CD14-positive monocyte (primary cell): ENCODE measurements at regions of chr6 and their contacts with region 1.

Region 1: DNA sequence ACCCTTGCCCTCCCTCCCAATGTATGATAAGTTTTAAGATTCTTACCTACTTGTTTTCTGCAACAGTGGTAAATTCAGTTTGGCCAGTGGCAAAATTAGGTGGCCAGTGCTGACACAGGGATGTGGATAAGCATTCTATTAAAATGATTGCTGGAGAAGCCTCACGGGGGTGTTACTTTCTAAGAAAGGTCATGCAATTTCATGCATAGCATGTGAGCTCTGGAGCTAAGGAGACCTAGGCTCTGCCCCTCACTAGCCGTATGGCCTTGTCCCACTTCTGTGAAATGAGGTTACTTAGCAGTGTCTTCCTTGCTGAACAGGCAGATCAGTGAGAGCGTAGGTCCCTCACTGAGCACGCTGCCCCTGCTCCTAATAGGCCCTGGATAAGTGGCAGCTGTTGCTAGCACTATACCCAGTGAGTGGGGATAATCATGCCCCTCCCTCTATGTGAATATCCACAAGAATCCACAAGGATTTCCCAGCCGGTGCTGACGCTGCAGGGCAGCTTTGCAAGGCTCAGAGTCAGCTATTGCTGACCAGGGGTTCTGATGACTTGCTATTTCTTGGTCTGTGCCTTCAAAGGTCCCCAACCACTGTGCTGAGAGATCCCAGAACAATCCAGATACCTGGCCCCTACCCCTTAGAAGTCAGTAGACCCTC is 86.5 kb upstream of the MRPS10 start:
- DNase-seq: no peak
- H3K4me3 ChIP-seq: no peak overlapping the region
- H3K4me3 Mint-ChIP-seq: no peak overlapping the region
- H3K27ac ChIP-seq: no peak overlapping the region
- H3K27ac Mint-ChIP-seq: peak overlapping the region in 3 of 7 donors; percentile 26 to 54 (median 50)
- H3K4me1 ChIP-seq: no peaks in the 10 kb centered on the region
- H3K4me1 Mint-ChIP-seq: peaks cover 15% of the 10 kb centered on the region
- H3K27me3 ChIP-seq: no peaks in the 10 kb centered on the region
- H3K27me3 Mint-ChIP-seq: peaks cover 0 to 6% (median 0%) of the 10 kb centered on the region in 3 donors
- CTCF ChIP-seq: no peak

Region 2: DNA sequence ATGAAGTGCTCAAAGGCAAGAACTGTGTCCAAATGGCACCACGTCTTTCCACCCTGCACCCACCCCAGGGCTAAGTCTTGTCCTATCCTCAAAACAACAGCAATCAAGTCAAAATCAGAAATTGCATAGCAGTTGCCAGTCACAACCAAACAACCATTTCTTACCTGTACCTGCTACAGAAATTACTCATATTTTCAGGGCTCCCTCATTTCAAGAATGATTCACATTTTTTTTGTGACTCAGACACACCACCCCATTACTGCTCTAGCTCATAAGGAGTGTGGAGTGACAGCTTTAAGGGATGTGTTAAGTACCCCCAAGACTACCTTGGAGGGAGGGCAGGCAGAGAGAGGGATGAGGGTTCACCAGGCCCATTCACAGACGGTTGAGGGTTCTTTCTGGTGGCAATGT is 35.8 kb after region 1 on chr6:
- intact Hi-C with region 1: loop called in 1 of 2 experiments (anchors 5 kb)
- DNase-seq: no peak
- H3K4me3 ChIP-seq: no peak overlapping the region
- H3K4me3 Mint-ChIP-seq: no peak overlapping the region
- H3K27ac ChIP-seq: no peak overlapping the region
- H3K27ac Mint-ChIP-seq: peak overlapping the region in 2 of 7 donors; percentile 50 to 71
- H3K4me1 ChIP-seq: peaks cover 20 to 22% of the 10 kb centered on the region in 2 donors
- H3K4me1 Mint-ChIP-seq: peaks cover 45% of the 10 kb centered on the region
- H3K27me3 ChIP-seq: no peaks in the 10 kb centered on the region
- H3K27me3 Mint-ChIP-seq: peaks cover 0 to 2% (median 0%) of the 10 kb centered on the region in 3 donors
- CTCF ChIP-seq: no peak

Region 3: GRCh38 chr6:43367245-43367984 is 1063.2 kb after region 1 on chr6:
- intact Hi-C with region 1: no loop called
- DNase-seq: peak; percentile 71 to 84 (median 82)
- H3K4me3 ChIP-seq: peak overlapping the region in 2 of 3 experiments; percentile 57 to 89
- H3K4me3 Mint-ChIP-seq: peak overlapping the region; percentile 89 to 94
- H3K27ac ChIP-seq: peak overlapping the region; percentile 4 to 77
- H3K27ac Mint-ChIP-seq: peak overlapping the region; percentile 58 to 94 (median 89)
- H3K4me1 ChIP-seq: peaks cover 22 to 30% of the 10 kb centered on the region in 2 donors
- H3K4me1 Mint-ChIP-seq: peaks cover 32% of the 10 kb centered on the region
- H3K27me3 ChIP-seq: no peaks in the 10 kb centered on the region
- H3K27me3 Mint-ChIP-seq: peaks cover 0 to 8% (median 3%) of the 10 kb centered on the region in 3 donors
- CTCF ChIP-seq: no peak